ENCODE measurements at regions of chr20 and their contacts with region 1.

Region 1: DNA sequence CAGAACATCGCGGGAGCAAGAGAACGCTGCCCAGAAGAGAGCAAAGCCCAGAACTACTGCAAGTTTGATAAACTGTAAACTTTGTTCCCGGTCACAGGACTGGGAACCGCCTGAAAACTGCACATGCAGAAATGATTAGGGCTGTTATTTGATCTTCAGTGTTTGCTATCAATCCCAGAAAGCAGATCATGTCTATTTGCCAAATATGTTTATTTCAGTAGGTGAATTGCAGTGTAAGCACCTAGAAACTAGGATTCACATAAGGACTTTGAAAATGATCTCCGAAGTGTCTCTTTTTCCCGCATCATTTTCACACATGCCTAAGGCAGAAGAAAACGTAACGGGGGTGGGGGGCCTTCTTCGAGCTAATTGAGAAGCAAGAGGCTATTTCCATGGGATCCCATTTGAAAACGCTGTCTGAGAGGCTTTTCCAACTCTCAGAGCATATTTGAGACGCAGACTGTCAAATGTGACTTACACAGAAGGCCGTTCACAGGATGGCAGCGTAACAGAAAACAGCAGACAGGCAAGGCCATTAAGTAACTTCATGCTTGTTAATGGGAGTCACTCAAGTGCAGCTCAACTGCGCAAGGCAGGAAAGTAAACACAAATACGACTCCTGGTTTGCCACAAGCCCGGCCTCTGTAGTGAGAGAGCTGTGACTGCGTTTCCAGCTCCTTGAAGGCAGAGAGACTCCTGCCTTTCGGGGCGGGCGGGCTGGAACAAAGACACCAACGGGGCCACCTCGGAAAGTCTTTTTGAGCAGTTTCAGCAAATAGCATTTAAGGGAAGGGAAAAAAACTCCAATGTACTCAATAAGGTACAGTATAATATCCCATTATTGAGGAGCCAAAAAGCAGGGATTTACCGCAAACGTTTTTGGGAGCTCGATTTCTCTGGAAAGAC is 144.7 kb upstream of the ZNF217 start:
- DNase-seq: no peak
- H3K4me3 ChIP-seq: no peak overlapping the region
- H3K27ac ChIP-seq: no peak overlapping the region
- H3K4me1 ChIP-seq: peaks cover 11% of the 10 kb centered on the region
- H3K27me3 ChIP-seq: peaks cover 2 to 7% of the 10 kb centered on the region in 2 experiments
- CTCF ChIP-seq: no peak
- POLR2A ChIP-seq: no peak

Region 2: GRCh38 chr20:53660078-53660909 is 78.0 kb before region 1 on chr20:
- CTCF ChIA-PET with region 1: no interaction called
- POLR2A ChIA-PET with region 1: no interaction called
- dilution Hi-C with region 1: no loop called
- intact Hi-C with region 1: no loop called
- DNase-seq: peak; percentile 22
- H3K4me3 ChIP-seq: peak overlapping the region; percentile 10 to 52 (median 13)
- H3K27ac ChIP-seq: no peak overlapping the region
- H3K4me1 ChIP-seq: peaks cover 5% of the 10 kb centered on the region
- H3K27me3 ChIP-seq: no peaks in the 10 kb centered on the region
- CTCF ChIP-seq: no peak
- POLR2A ChIP-seq: no peak

Region 3: GRCh38 chr20:53794529-53795115 is 56.3 kb after region 1 on chr20:
- CTCF ChIA-PET with region 1: no interaction called
- POLR2A ChIA-PET with region 1: no interaction called
- dilution Hi-C with region 1: no loop called
- intact Hi-C with region 1: loop called (anchors 5 kb)
- DNase-seq: no peak
- H3K4me3 ChIP-seq: no peak overlapping the region
- H3K27ac ChIP-seq: no peak overlapping the region
- H3K4me1 ChIP-seq: peaks cover 18% of the 10 kb centered on the region
- H3K27me3 ChIP-seq: no peaks in the 10 kb centered on the region
- CTCF ChIP-seq: no peak
- POLR2A ChIP-seq: no peak

Region 4: DNA sequence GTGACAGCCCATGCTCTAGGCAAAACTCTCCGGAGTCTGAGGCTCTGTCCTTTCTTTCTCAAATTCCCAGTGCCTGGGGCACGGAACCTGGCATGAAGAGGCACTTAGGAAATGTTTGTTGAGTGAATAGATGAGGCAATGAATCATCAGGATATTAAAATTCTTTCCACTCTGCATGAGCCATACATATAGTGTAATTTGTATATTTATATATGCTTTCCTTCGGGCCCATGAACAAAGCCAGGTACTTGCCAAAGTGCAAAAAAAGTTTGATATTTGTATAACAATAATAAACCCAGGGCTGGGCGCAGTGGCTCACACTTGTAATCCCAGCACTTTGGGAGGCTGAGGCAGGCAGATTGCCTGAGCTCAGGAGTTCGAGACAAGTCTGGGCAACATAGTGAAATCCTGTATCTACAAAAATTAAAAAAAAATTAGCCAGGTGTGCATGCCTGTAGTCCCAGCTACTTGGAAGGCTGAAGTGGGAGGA is 67.6 kb after region 1 on chr20:
- CTCF ChIA-PET with region 1: no interaction called
- POLR2A ChIA-PET with region 1: interaction called, 10 read pairs
- dilution Hi-C with region 1: no loop called
- intact Hi-C with region 1: no loop called
- DNase-seq: peak; percentile 64
- H3K4me3 ChIP-seq: no peak overlapping the region
- H3K27ac ChIP-seq: no peak overlapping the region
- H3K4me1 ChIP-seq: peaks cover 3% of the 10 kb centered on the region
- H3K27me3 ChIP-seq: no peaks in the 10 kb centered on the region
- CTCF ChIP-seq: no peak
- POLR2A ChIP-seq: no peak

Region 5: GRCh38 chr20:53875433-53875832 is 137.1 kb after region 1 on chr20:
- CTCF ChIA-PET with region 1: interaction called, 3 read pairs
- POLR2A ChIA-PET with region 1: no interaction called
- dilution Hi-C with region 1: no loop called
- intact Hi-C with region 1: loop called (anchors 5 kb)
- DNase-seq: no peak
- H3K4me3 ChIP-seq: no peak overlapping the region
- H3K27ac ChIP-seq: no peak overlapping the region
- H3K4me1 ChIP-seq: peaks cover 14% of the 10 kb centered on the region
- H3K27me3 ChIP-seq: no peaks in the 10 kb centered on the region
- CTCF ChIP-seq: no peak
- POLR2A ChIP-seq: no peak

Measured in endothelial cell of umbilical vein (primary cell).